ENCODE measurements at regions of chr1 and their contacts with region 1.

Region 1: GRCh38 chr1:148353461-148354283 is 129.4 kb downstream of the PPIAL4G start:
- DNase-seq: peak; percentile 95
- ATAC-seq: peak; percentile 99
- H3K4me3 ChIP-seq: peak overlapping the region in 1 of 2 experiments; percentile 5; a peak in 2 of 4 replicates
- H3K27ac ChIP-seq: peak overlapping the region; percentile 46; the same call in 1 of the 2 replicates
- H3K4me1 ChIP-seq: peaks cover 10% of the 10 kb centered on the region
- H3K27me3 ChIP-seq: peaks cover 2% of the 10 kb centered on the region; the same call in 1 of the 2 replicates
- CTCF ChIP-seq: no peak

Region 2: GRCh38 chr1:148373192-148373925 is 19.7 kb after region 1 on chr1:
- CTCF ChIA-PET with region 1: interaction called, 15 read pairs
- POLR2A ChIA-PET with region 1: interaction called, 3 read pairs
- in situ Hi-C with region 1: no loop called
- intact Hi-C with region 1: no loop called
- DNase-seq: no peak
- ATAC-seq: no peak
- H3K4me3 ChIP-seq: no peak overlapping the region
- H3K27ac ChIP-seq: no peak overlapping the region
- H3K4me1 ChIP-seq: peaks cover 2% of the 10 kb centered on the region; the same call in 1 of the 2 replicates
- H3K27me3 ChIP-seq: no peaks in the 10 kb centered on the region
- CTCF ChIP-seq: no peak

Measured in Panc1 (cell line).